Naive thymus-derived CD4-positive, alpha-beta T cell (primary cell): ENCODE measurements at regions of chrX and their contacts with region 1.

Region 1: GRCh38 chrX:115650916-115651315 is 89.9 kb downstream of the PLS3 start:
- DNase-seq: peak in 2 of 9 donors; percentile 8 to 15
- ATAC-seq: no peak
- H3K4me3 ChIP-seq: no peak overlapping the region
- H3K4me3 Mint-ChIP-seq: no peak overlapping the region
- H3K27ac ChIP-seq: no peak overlapping the region
- H3K27ac Mint-ChIP-seq: no peak overlapping the region
- H3K4me1 ChIP-seq: no peaks in the 10 kb centered on the region
- H3K4me1 Mint-ChIP-seq: no peaks in the 10 kb centered on the region
- H3K27me3 ChIP-seq: no peaks in the 10 kb centered on the region
- H3K27me3 Mint-ChIP-seq: no peaks in the 10 kb centered on the region

Region 2: DNA sequence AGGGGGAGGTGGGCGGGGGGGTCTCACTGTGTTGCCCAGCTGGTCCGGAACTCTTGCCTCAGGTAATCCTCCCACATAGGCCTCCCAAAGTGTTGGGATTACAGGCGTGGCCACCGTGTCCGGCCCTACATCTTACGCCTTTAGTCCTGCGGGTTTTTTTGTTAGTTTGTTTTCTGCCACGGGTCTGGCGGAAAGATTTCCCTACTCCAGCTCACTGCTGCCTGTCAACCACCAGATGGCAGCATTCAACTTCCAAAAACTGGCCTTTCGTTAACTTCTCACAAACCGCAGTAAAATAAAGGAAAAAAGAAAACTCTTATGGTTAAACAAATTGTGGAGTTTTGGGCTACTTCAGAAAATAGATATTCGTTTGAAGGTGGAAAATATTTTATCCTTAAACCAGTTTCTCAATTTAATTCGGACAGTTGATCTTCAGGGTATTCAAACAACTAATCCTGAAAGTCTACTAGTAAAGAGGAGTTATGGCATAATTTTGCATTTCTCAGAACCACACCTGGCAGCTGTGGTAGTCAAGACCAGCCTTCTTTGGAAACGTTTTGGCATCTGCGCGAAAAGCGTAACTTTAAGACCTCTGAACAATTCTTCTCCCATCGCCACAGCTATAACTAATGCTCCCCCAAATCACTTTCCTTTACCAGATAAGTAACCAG is 320.3 kb before region 1 on chrX:
- CTCF ChIA-PET with region 1: no interaction called
- POLR2A ChIA-PET with region 1: no interaction called
- intact Hi-C with region 1: no loop called
- DNase-seq: peak in 6 of 9 donors; percentile 1 to 49 (median 34)
- ATAC-seq: no peak
- H3K4me3 ChIP-seq: no peak overlapping the region
- H3K4me3 Mint-ChIP-seq: peak overlapping the region in 1 of 10 donors; percentile 47
- H3K27ac ChIP-seq: no peak overlapping the region
- H3K27ac Mint-ChIP-seq: no peak overlapping the region
- H3K4me1 ChIP-seq: no peaks in the 10 kb centered on the region
- H3K4me1 Mint-ChIP-seq: peaks cover 0 to 5% (median 0%) of the 10 kb centered on the region in 7 donors
- H3K27me3 ChIP-seq: no peaks in the 10 kb centered on the region
- H3K27me3 Mint-ChIP-seq: peaks cover 0 to 5% (median 0%) of the 10 kb centered on the region in 5 donors

Region 3: DNA sequence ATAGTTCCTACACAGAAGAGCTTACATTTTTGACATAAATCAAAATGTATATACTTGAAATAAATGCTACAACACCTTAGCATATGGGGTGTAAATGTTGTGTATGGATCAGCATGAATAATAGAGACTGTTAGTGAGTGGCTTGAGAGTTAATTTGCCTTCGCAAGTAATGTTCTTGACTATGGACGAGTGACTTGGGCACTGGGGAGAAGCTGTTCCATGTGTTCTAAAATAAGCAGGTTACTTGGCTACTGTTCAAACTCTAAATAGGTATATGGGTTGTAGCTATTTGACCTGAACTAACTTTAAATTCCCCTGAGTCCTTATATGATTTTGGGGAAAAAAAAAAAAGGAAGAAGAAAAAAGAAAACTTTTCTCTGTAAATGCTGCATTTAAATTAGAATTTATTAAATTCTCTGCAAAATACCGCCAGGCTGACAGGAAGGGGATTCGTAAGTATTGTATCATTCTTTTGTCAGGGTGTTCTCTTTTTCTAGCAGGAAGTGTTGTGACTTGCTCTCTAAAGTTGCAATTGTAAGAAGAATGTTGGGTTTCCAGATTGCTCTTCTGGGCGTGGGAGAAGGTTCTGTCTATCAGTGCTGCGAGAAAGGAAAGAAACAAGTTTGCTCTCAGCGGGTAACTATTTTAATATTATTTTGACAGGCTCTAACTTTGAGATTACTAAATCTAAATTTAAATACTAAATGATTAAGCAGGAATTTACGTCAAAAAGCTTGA is 57.8 kb before region 1 on chrX:
- CTCF ChIA-PET with region 1: no interaction called
- POLR2A ChIA-PET with region 1: no interaction called
- intact Hi-C with region 1: no loop called
- DNase-seq: no peak
- ATAC-seq: no peak
- H3K4me3 ChIP-seq: no peak overlapping the region
- H3K4me3 Mint-ChIP-seq: no peak overlapping the region
- H3K27ac ChIP-seq: no peak overlapping the region
- H3K27ac Mint-ChIP-seq: no peak overlapping the region
- H3K4me1 ChIP-seq: no peaks in the 10 kb centered on the region
- H3K4me1 Mint-ChIP-seq: no peaks in the 10 kb centered on the region
- H3K27me3 ChIP-seq: no peaks in the 10 kb centered on the region
- H3K27me3 Mint-ChIP-seq: no peaks in the 10 kb centered on the region

Region 4: DNA sequence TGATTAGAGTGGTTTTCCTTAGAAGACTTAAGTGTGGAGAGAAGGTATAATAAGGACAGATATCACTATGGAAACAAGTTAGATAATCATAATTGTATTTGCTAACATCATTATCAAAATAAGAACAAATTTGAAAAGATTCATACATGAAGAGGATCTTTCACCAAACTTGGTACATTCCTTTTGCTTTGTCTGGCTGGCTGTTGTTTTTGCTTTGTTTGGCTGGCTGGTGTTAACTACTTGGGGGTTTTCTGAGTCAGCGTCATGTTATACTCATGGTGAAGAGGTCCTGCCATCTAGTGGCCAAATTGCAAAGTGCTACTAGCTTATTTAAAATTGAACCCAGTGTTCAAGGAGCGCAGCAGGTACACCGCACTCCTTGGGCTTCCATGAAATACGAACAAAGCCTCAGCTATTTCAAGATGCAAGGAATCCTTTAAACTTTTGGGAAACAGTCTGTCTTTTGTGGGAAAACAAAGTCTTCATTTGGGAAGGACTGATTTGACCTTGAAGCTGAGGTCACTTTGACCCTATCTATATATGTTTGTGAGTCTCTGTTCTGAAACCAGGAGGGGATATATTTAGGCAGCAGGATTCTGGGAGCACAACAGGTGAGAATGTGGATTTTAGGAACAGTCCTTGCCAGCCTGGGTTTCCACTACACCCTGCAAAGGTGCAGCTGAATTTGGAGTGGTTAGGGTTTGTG is 39.7 kb after region 1 on chrX:
- CTCF ChIA-PET with region 1: no interaction called
- POLR2A ChIA-PET with region 1: no interaction called
- intact Hi-C with region 1: loop called (anchors 1 to 5 kb)
- DNase-seq: peak in 7 of 9 donors; percentile 2 to 40 (median 23)
- ATAC-seq: peak; percentile 34
- H3K4me3 ChIP-seq: no peak overlapping the region
- H3K4me3 Mint-ChIP-seq: no peak overlapping the region
- H3K27ac ChIP-seq: no peak overlapping the region
- H3K27ac Mint-ChIP-seq: no peak overlapping the region
- H3K4me1 ChIP-seq: no peaks in the 10 kb centered on the region
- H3K4me1 Mint-ChIP-seq: no peaks in the 10 kb centered on the region
- H3K27me3 ChIP-seq: no peaks in the 10 kb centered on the region
- H3K27me3 Mint-ChIP-seq: peaks cover 0 to 4% (median 0%) of the 10 kb centered on the region in 5 donors

Region 5: DNA sequence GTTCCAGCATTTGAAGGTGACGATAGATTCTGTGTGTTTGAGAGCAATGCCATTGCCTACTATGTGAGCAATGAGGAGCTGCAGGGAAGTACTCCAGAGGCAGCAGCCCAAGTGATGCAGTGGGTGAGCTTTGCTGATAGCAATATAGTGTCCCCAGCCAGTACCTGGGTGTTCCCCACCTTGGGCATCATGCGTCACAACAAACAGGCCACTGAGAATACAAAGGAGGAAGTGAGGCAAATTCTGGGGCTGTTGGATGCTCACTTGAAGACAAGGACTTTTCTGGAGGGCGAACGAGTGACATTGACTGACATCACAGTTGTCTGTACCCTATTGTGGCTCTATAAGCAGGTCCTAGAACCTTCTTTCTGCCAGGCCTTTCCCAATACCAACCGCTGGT is 52.1 kb after region 1 on chrX:
- CTCF ChIA-PET with region 1: no interaction called
- POLR2A ChIA-PET with region 1: no interaction called
- intact Hi-C with region 1: no loop called
- DNase-seq: no peak
- ATAC-seq: no peak
- H3K4me3 ChIP-seq: no peak overlapping the region
- H3K4me3 Mint-ChIP-seq: no peak overlapping the region
- H3K27ac ChIP-seq: no peak overlapping the region
- H3K27ac Mint-ChIP-seq: no peak overlapping the region
- H3K4me1 ChIP-seq: no peaks in the 10 kb centered on the region
- H3K4me1 Mint-ChIP-seq: no peaks in the 10 kb centered on the region
- H3K27me3 ChIP-seq: no peaks in the 10 kb centered on the region
- H3K27me3 Mint-ChIP-seq: peaks cover 0 to 7% (median 0%) of the 10 kb centered on the region in 5 donors

Region 6: DNA sequence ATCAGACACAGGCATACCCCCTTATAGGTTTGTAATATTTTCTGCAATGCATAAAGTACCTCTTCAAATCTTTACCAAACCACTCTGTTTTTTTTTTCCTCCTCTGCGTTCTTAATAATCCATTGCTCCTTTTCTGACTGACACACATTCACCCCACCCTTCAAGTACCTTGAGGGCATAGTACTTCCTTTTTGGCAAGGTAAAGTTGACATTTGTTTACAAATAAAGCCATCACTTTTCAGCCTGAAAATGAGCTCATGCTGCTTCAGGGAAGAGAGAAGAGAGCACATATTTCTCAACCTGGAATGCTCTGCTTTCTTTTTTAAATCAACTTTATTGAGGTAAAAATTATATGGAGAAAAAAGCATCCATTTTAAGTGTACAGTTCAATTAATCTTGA is 633.5 kb after region 1 on chrX:
- CTCF ChIA-PET with region 1: no interaction called
- POLR2A ChIA-PET with region 1: no interaction called
- intact Hi-C with region 1: no loop called
- DNase-seq: no peak
- ATAC-seq: no peak
- H3K4me3 ChIP-seq: no peak overlapping the region
- H3K4me3 Mint-ChIP-seq: no peak overlapping the region
- H3K27ac ChIP-seq: no peak overlapping the region
- H3K27ac Mint-ChIP-seq: peak overlapping the region in 1 of 9 donors; percentile 85
- H3K4me1 ChIP-seq: no peaks in the 10 kb centered on the region
- H3K4me1 Mint-ChIP-seq: no peaks in the 10 kb centered on the region
- H3K27me3 ChIP-seq: no peaks in the 10 kb centered on the region
- H3K27me3 Mint-ChIP-seq: no peaks in the 10 kb centered on the region